Lower leg skin (tissue), 4 donors: ENCODE measurements at regions of chr17 and their contacts with region 1.

Region 1: DNA sequence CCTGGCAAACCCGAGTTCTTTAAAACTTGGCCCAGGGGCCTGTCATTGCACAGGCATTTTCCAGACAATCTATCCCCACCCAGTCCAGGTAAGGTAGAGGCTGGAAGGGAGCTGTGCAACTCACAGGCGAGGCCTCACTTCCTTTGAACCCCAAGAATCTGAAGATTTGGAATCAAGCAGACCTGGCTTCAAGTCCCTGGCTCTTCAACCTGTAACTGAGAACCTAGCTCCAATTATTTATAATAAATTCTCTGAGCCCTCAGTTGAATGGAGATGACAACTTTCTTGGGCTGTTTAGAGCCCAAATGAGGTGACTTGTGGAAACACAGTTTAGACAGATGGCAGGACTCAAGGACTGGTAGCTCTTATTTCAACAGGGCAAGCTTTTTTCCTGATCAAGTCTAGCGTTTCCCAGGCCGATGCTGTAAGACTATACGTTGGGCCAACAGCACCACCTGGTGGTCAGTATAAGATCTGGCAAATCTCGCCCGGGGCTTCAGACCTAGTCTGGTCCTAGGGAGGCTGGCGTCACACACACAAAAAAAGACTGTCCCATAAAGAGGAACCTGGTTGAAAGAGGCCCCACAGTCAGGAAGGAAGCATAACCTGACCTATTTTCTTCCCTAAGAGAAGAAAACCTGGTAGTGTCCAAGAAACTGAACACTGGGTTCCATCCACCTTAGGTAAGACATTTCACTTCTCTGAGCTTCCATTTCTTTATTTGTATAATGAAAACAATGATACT is 117.9 kb downstream of the C17orf67 start:
- DNase-seq: peak; percentile 81 to 96
- H3K4me3 ChIP-seq: no peak overlapping the region
- CTCF ChIP-seq: peak in 1 of 3 donors; percentile 64
- POLR2A ChIP-seq: no peak

Region 2: GRCh38 chr17:56592487-56593085 is 123.2 kb before region 1 on chr17:
- intact Hi-C with region 1: loop called (anchors 5 kb)
- DNase-seq: peak in 1 of 2 donors; percentile 87
- H3K4me3 ChIP-seq: peak overlapping the region; percentile 27
- CTCF ChIP-seq: no peak
- POLR2A ChIP-seq: no peak

Region 3: DNA sequence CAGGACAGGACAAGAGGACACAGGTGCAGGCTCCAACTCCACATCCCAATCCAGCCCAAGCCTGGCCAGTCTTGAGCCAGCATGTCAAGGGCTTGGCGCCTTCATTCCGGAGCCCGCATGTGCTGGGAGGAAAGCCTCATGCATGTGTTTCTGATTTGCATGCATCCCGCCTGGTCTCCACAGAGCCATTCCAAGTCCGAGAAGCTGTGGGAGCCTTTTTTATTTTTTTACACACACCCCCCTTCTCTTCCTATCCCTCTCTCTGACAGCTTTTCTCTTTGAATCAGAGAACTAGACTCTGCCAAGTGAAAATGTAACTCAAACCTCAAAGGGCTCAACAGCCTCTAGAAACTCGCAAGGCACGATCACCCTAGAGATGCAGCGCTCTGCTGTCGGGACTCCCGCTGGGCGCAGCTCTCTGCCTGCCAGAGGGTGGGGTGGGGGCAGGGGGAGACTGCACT is 77.2 kb before region 1 on chr17:
- intact Hi-C with region 1: no loop called
- DNase-seq: peak in 1 of 2 donors; percentile 54
- H3K4me3 ChIP-seq: no peak overlapping the region
- CTCF ChIP-seq: no peak
- POLR2A ChIP-seq: no peak